Vagina (tissue), 2 donors: ENCODE measurements at regions of chr5 and their contacts with region 1.

Region 1: GRCh38 chr5:163459922-163460766 is at the starts of genes HMMR and NUDCD2:
- DNase-seq: peak; percentile 99
- H3K4me3 ChIP-seq: peak within 1 kb of the TSS; percentile 75 to 89
- H3K27ac ChIP-seq: peak within 1 kb of the TSS; percentile 93
- H3K4me1 ChIP-seq: peaks cover 30% of the 10 kb centered on the region
- H3K27me3 ChIP-seq: no peaks in the 10 kb centered on the region
- CTCF ChIP-seq: no peak
- POLR2A ChIP-seq: peak in 1 of 2 donors; percentile 61
- total RNA-seq, gene HMMR: 9.3 TPM
- total RNA-seq, gene NUDCD2: 4.4 TPM

Region 2: GRCh38 chr5:163505368-163506094 is 45.4 kb after region 1 on chr5 and contains the start of gene MAT2B:
- intact Hi-C with region 1: loop called (anchors 10 kb)
- DNase-seq: peak in 1 of 2 donors; percentile 96
- H3K4me3 ChIP-seq: peak within 1 kb of the TSS; percentile 71 to 89
- H3K27ac ChIP-seq: peak within 1 kb of the TSS; percentile 98
- H3K4me1 ChIP-seq: peaks cover 54% of the 10 kb centered on the region
- H3K27me3 ChIP-seq: no peaks in the 10 kb centered on the region
- CTCF ChIP-seq: peak; percentile 0 to 61 (median 27)
- POLR2A ChIP-seq: peak in 1 of 2 donors; percentile 86
- total RNA-seq, gene MAT2B: 38.3 TPM